ENCODE measurements at regions of chr3 and their contacts with region 1.

Region 1: DNA sequence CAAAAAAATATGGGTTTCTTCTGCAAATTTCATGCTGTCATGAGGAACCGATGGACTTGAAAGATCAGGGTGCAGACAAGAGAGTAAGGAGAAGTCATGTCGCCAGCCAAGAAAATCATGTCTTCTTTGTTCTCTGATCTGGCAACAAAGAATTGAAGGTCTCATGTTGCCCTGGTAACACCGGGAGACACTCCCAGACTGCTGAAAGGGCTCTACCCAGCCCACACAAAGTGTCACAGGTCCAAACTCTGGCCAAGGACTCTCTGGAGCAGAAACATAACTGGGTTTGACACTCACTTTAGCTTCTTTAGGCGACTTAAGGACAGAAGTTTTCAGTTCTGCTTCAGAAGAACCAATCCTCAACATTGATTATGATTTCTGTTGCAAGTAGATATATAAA is 42.9 kb downstream of the SIDT1 start:
- DNase-seq: no peak
- H3K4me3 Mint-ChIP-seq: no peak overlapping the region
- H3K27ac Mint-ChIP-seq: no peak overlapping the region
- H3K4me1 Mint-ChIP-seq: peaks cover 5% of the 10 kb centered on the region
- H3K27me3 Mint-ChIP-seq: no peaks in the 10 kb centered on the region

Region 2: GRCh38 chr3:113051302-113051711 is 523.9 kb before region 1 on chr3:
- CTCF ChIA-PET with region 1: interaction called, 4 read pairs
- POLR2A ChIA-PET with region 1: no interaction called
- intact Hi-C with region 1: loop called (anchors 1 kb)
- DNase-seq: peak; percentile 92
- H3K4me3 Mint-ChIP-seq: no peak overlapping the region
- H3K27ac Mint-ChIP-seq: no peak overlapping the region
- H3K4me1 Mint-ChIP-seq: peaks cover 5% of the 10 kb centered on the region
- H3K27me3 Mint-ChIP-seq: no peaks in the 10 kb centered on the region

Region 3: DNA sequence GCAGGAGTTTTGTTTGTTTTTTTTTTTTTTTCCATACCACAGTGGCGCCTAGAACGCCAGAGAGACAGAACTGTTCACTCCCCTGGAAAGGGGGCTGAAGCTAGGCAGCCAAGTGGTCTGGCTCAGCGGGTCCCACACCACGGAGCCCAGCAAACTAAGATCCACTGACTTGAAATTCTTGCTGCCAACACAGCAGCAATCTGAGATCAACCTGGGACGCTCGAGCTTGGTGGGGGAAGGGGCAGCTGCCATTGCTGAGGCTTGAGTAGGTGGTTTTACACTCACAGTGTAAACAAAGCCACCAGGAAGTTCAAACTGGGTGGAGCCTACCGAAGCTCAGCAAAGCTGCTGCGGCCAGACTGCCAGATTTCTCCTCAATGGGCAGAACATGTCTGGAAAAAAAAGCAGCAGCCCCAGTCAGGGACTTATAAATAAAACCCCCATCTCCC is 90.0 kb before region 1 on chr3:
- CTCF ChIA-PET with region 1: interaction called, 15 read pairs
- POLR2A ChIA-PET with region 1: no interaction called
- intact Hi-C with region 1: no loop called
- DNase-seq: peak; percentile 19
- H3K4me3 Mint-ChIP-seq: no peak overlapping the region
- H3K27ac Mint-ChIP-seq: no peak overlapping the region
- H3K4me1 Mint-ChIP-seq: no peaks in the 10 kb centered on the region
- H3K27me3 Mint-ChIP-seq: no peaks in the 10 kb centered on the region

Region 4: DNA sequence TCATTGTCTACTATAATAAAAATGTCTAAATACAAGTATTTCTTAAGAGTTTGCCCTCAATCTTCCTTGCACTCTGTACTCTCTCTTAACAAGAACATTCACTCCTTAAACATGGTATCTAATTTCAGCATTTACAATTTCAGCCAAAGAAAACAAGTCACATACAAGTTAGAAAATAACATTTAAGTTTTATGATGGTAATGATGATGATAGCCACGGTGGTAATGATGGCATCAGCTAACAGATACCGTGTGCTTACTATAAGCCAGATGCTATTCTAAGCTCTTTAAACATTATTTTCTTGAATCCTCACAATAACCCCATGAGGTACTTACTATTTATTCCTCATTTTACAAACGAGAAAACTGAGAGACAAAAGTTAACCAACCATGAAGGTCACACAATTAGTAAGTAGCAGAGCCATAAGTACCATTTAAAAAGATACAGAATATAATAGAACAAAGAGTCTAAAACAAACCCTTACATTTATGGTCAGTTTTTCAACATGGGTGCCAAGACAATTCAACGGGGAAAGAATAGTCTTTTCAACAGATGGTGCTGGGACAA is 67.6 kb before region 1 on chr3:
- CTCF ChIA-PET with region 1: interaction called, 19 read pairs
- POLR2A ChIA-PET with region 1: no interaction called
- intact Hi-C with region 1: no loop called
- DNase-seq: no peak
- H3K4me3 Mint-ChIP-seq: no peak overlapping the region
- H3K27ac Mint-ChIP-seq: no peak overlapping the region
- H3K4me1 Mint-ChIP-seq: peaks cover 5% of the 10 kb centered on the region
- H3K27me3 Mint-ChIP-seq: no peaks in the 10 kb centered on the region

Region 5: DNA sequence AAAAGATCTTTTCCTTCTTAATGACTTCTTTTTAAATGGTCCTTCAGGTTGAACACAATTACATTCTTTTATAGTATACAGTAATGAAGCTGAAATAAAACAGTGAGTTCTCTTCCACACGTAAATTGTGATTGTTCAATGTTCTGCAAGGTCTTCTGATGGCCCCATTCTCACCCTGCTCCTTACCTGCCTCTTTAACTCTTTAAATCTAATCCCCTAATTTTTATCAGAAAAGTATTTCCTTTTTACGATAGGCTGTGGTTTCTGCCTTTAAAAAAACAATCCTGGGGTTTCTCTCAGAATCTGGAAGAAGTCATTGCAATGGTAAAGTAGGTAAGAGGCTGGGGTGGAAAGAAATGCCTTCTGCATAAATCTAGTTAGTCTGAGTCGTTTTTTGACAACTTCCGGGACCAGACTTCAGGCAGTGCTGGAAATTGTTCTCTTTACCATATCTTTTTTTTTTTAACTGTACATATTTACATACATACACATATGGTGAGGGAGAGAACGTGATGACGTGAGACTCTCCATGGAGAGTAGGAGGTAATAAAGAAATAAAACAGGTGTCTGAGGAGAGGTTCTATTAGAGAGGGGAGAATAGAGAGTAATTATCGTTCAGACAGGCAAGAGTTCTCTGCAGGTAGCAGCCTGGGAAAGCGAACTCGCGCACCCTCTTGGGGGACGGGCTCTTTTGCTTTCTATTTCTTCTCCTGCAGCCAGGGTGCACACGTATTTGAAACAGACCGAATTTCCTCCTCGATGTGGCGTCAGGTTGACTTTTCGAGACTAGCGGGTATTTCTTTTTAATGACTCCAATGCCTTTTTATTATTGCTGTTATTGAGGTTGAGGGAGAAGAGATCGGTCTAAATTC is 43.1 kb before region 1 on chr3 and contains the start of gene SIDT1:
- CTCF ChIA-PET with region 1: interaction called, 13 read pairs
- POLR2A ChIA-PET with region 1: no interaction called
- intact Hi-C with region 1: loop called (anchors 1 kb)
- DNase-seq: peak; percentile 79
- H3K4me3 Mint-ChIP-seq: peak within 1 kb of the TSS; percentile 98
- H3K27ac Mint-ChIP-seq: peak within 1 kb of the TSS; percentile 96
- H3K4me1 Mint-ChIP-seq: peaks cover 45% of the 10 kb centered on the region
- H3K27me3 Mint-ChIP-seq: peaks cover 1% of the 10 kb centered on the region
- total RNA-seq, gene SIDT1: 11.3 TPM

Region 6: GRCh38 chr3:113560831-113561623 is 14.2 kb before region 1 on chr3:
- CTCF ChIA-PET with region 1: interaction called, 14 read pairs
- POLR2A ChIA-PET with region 1: interaction called, 4 read pairs
- intact Hi-C with region 1: no loop called
- DNase-seq: no peak
- H3K4me3 Mint-ChIP-seq: no peak overlapping the region
- H3K27ac Mint-ChIP-seq: no peak overlapping the region
- H3K4me1 Mint-ChIP-seq: peaks cover 33% of the 10 kb centered on the region
- H3K27me3 Mint-ChIP-seq: no peaks in the 10 kb centered on the region